ENCODE measurements at regions of chr11 and their contacts with region 1.

Region 1: DNA sequence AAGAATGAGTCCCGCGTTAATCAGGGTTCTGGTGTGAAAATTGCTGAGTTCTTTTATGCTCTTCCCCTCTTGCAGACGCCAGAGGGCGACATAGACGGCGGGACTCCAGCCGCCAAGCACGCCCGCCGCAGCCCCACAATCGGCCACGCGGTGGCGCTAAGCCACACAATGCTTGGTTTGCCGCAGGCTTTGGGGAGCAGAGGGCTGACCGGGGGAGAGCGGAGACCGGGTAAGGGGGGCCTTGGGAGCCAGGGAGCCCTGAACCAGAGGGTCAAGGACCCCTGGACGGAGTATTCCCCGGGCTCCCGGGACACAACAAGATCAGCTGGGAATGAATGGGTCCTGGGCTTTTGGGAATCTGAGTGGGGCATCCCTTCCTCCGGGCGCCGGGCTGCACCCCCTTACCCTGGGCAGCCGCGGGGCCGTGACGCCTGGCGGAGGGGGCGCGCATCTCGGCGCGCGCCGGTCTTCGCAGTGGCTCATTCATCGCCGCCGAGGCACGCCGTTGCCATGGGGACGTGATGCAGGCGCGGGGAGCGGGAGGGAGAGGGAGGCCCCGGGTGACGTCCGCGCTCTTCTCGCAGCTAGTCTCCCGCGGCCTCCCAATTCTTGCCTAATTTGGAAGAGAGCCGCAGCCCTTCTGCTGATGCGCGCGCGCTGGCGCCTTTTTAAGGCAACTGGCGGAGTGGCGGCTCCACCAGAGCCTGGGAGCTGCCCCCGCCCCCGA is 12.2 kb upstream of the NPAS4 start:
- DNase-seq: peak; percentile 57 to 74
- ATAC-seq: peak; percentile 84 to 93
- H3K4me3 ChIP-seq: peak overlapping the region; percentile 9 to 45 (median 36)
- H3K27ac ChIP-seq: no peak overlapping the region
- H3K4me1 ChIP-seq: no peaks in the 10 kb centered on the region
- H3K27me3 ChIP-seq: peaks cover 0 to 10% (median 0%) of the 10 kb centered on the region in 3 donors
- CTCF ChIP-seq: peak; percentile 64 to 100 (median 99)
- POLR2A ChIP-seq: no peak

Region 2: DNA sequence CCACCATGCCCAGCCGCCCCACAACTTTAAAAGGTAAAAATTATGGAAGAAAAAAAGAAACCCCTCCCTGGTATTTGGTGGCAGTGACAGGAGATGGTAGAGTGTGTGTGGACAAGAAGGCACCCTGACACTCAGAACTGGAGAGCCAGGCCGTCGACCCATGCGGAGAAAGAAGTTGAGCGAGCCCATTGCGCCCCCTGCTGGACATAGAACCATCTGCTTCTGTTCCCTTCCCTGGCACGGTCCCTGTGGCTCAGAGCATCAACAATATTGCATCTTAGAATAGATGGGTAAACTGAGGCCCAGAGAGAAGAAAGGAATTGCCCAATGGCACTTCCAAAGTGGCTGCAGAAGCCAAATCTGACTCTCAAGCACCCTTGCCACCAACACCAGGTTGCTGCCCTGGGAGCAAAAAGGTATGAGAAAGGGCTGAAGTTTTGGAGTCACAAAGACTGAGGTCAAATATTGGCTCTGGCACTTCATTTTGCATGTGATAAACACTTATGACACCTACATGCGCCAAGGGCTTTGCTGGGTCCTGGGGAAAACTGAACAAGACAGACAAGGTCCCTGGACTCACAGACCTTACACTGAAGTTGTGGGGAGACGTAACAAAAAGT is 21.4 kb after region 1 on chr11:
- in situ Hi-C with region 1: no loop called
- intact Hi-C with region 1: loop called (anchors 1 kb)
- DNase-seq: peak; percentile 41 to 57
- ATAC-seq: peak; percentile 54 to 89
- H3K4me3 ChIP-seq: no peak overlapping the region
- H3K27ac ChIP-seq: no peak overlapping the region
- H3K4me1 ChIP-seq: no peaks in the 10 kb centered on the region
- H3K27me3 ChIP-seq: no peaks in the 10 kb centered on the region
- CTCF ChIP-seq: peak; percentile 54 to 85 (median 78)
- POLR2A ChIP-seq: no peak

Region 3: GRCh38 chr11:66438504-66439466 is 30.1 kb after region 1 on chr11 and contains the start of gene MRPL11:
- in situ Hi-C with region 1: no loop called
- intact Hi-C with region 1: loop called (anchors 2 kb)
- DNase-seq: peak; percentile 74 to 86
- ATAC-seq: peak; percentile 100
- H3K4me3 ChIP-seq: peak within 1 kb of the TSS; percentile 91 to 95 (median 92)
- H3K27ac ChIP-seq: peak within 1 kb of the TSS; percentile 81 to 97 (median 84)
- H3K4me1 ChIP-seq: peaks cover 5 to 14% of the 10 kb centered on the region in 2 donors
- H3K27me3 ChIP-seq: no peaks in the 10 kb centered on the region
- CTCF ChIP-seq: peak; percentile 35 to 70 (median 57)
- POLR2A ChIP-seq: no peak
- total RNA-seq, gene MRPL11: 35.1 to 64.1 (median 52.5) TPM

Region 4: GRCh38 chr11:66545701-66546367 is 137.2 kb after region 1 on chr11 and contains the start of gene ZDHHC24:
- in situ Hi-C with region 1: no loop called
- intact Hi-C with region 1: no loop called
- DNase-seq: peak; percentile 96 to 97
- ATAC-seq: peak; percentile 86 to 92
- H3K4me3 ChIP-seq: peak within 1 kb of the TSS; percentile 70 to 99 (median 80)
- H3K27ac ChIP-seq: peak within 1 kb of the TSS; percentile 79 to 94 (median 91)
- H3K4me1 ChIP-seq: peaks cover 25 to 50% of the 10 kb centered on the region in 2 donors
- H3K27me3 ChIP-seq: no peaks in the 10 kb centered on the region
- CTCF ChIP-seq: no peak
- POLR2A ChIP-seq: peak; percentile 49 to 75
- total RNA-seq, gene ZDHHC24: 7.2 to 13.0 (median 11.2) TPM

Region 5: GRCh38 chr11:66639066-66639813 is 230.6 kb after region 1 on chr11:
- in situ Hi-C with region 1: no loop called
- intact Hi-C with region 1: no loop called
- DNase-seq: no peak
- ATAC-seq: peak in 1 of 2 donors; percentile 7
- H3K4me3 ChIP-seq: peak overlapping the region; percentile 73 to 90 (median 84)
- H3K27ac ChIP-seq: peak overlapping the region; percentile 90 to 94 (median 92)
- H3K4me1 ChIP-seq: peaks cover 57 to 64% of the 10 kb centered on the region in 2 donors
- H3K27me3 ChIP-seq: no peaks in the 10 kb centered on the region
- CTCF ChIP-seq: no peak
- POLR2A ChIP-seq: no peak

Region 6: GRCh38 chr11:66835768-66836405 is 427.2 kb after region 1 on chr11:
- in situ Hi-C with region 1: loop called in 3 of 4 experiments (anchors 10 to 25 kb)
- intact Hi-C with region 1: loop called (anchors 2 kb)
- DNase-seq: no peak
- ATAC-seq: no peak
- H3K4me3 ChIP-seq: no peak overlapping the region
- H3K27ac ChIP-seq: no peak overlapping the region
- H3K4me1 ChIP-seq: no peaks in the 10 kb centered on the region
- H3K27me3 ChIP-seq: no peaks in the 10 kb centered on the region
- CTCF ChIP-seq: no peak
- POLR2A ChIP-seq: no peak

Measured in gastrocnemius medialis (tissue), 4 donors.